Activated CD4-positive, alpha-beta memory T cell treated with anti-CD3 and anti-CD28 coated beads for 36 hours (primary cell): ENCODE measurements at regions of chr15 and their contacts with region 1.

Region 1: DNA sequence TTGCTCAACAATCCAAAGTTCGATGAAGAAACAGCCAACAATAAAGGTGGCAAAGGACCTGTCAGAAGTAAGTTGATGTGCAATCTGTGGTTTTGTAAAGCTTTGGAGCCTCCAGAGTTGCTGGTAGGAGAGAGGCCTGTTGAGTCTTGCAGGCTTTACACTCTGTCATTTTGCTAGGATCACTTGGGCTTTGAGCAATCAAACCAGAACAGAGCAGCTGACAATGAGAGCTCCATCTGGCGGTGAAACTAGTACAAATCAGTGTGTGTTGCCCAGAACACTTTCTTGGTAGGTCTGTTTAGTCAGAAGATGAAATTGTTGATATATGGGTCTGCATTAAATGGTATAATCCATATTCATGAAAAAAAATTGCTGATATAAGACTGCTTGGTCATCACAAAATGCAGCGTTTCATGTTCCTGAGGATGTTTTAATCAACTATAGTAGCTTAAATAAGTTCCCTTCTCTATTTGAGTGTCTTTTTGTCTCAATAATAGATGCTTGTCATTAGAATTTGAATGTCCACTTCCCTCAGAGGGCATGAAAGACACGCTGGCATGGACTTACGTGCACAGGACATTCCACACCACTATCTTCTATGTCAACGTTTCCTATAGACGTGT is 25.7 kb downstream of the TMOD2 start:
- DNase-seq: peak; percentile 67
- H3K4me3 Mint-ChIP-seq: no peak overlapping the region
- H3K27ac Mint-ChIP-seq: no peak overlapping the region
- H3K4me1 Mint-ChIP-seq: peaks cover 7% of the 10 kb centered on the region
- H3K27me3 Mint-ChIP-seq: no peaks in the 10 kb centered on the region

Region 2: DNA sequence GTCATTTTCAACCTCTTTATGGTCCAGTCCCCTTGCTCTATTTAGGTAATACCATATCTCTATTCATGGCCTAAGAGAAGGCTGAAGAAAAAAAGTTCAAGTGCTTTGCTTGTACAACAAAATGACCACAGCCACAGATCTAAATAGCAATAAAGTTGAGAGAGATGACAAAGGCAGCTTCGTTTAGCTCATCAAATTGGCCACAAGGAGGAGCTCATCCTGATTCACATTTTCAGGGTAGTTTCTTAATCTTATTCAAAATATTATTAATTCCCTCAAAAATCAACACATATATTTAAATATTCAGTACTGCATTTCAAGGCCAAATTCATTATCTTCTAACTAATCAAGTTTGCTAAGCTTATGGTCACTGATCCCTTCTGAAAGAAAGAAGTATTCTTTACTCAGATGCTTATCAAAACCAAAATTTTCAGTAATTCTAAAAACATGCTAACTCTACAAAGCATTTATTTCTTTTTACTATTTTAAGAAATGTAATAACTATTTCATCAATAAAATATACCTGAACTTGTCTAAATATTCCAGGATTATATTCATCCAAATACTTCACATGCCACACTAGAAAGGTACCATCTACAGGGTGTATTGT is 240.0 kb before region 1 on chr15:
- CTCF ChIA-PET with region 1: interaction called, 4 read pairs
- POLR2A ChIA-PET with region 1: no interaction called
- intact Hi-C with region 1: loop called (anchors 1 kb)
- DNase-seq: no peak
- H3K4me3 Mint-ChIP-seq: no peak overlapping the region
- H3K27ac Mint-ChIP-seq: no peak overlapping the region
- H3K4me1 Mint-ChIP-seq: peaks cover 2% of the 10 kb centered on the region
- H3K27me3 Mint-ChIP-seq: no peaks in the 10 kb centered on the region

Region 3: DNA sequence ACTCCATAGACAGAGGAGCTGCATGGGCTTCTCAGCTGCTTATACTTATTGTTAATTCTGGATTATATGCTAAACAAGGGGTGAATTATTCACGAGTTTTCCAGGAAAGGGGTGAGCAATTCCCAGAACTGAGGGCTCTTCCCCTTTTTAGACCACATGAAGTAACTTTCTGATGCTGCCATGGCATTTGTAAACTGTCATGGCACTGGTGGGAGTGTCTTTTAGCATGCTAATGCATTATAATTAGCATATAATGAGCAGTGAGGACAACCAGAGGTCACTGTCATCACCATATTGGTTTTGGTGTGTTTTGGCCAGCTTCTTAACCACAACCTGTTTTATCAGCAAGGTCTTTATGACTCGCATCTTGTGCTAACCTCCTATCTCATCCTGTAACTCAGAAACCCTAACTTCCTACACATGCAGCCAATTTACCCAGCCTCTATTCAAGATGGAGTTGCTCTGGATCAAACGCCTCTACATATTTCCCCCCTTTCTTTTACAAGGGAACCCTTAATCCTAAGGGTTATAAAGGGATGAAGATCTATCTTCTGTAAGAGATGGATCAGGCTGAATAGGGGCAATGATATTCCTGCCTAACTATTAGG is 142.4 kb before region 1 on chr15:
- CTCF ChIA-PET with region 1: interaction called, 10 read pairs
- POLR2A ChIA-PET with region 1: no interaction called
- intact Hi-C with region 1: no loop called
- DNase-seq: no peak
- H3K4me3 Mint-ChIP-seq: no peak overlapping the region
- H3K27ac Mint-ChIP-seq: no peak overlapping the region
- H3K4me1 Mint-ChIP-seq: no peaks in the 10 kb centered on the region
- H3K27me3 Mint-ChIP-seq: peaks cover 11% of the 10 kb centered on the region

Region 4: DNA sequence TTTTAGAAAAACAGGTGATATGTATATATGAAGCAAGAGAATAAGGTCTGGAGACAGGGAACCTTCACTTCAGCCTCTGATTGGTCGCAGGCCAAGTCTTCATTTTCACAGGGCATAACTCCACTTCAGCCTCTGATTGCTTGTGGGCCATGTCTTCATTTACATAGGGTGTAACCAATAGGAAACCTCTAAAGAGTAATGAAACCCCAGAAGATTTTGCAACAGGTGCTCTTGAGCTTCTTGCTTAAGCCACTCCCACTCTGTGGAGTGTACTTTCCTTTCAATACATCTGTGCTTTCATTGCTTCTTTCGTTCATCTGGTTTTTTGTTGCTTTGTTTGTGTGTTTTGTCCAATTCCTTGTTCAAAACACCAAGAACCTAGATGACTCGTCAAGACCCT is 118.4 kb before region 1 on chr15:
- CTCF ChIA-PET with region 1: interaction called, 51 read pairs
- POLR2A ChIA-PET with region 1: no interaction called
- intact Hi-C with region 1: no loop called
- DNase-seq: no peak
- H3K4me3 Mint-ChIP-seq: no peak overlapping the region
- H3K27ac Mint-ChIP-seq: no peak overlapping the region
- H3K4me1 Mint-ChIP-seq: no peaks in the 10 kb centered on the region
- H3K27me3 Mint-ChIP-seq: no peaks in the 10 kb centered on the region

Region 5: GRCh38 chr15:51726351-51727073 is 50.6 kb before region 1 on chr15:
- CTCF ChIA-PET with region 1: interaction called, 34 read pairs
- POLR2A ChIA-PET with region 1: no interaction called
- intact Hi-C with region 1: loop called (anchors 2 kb)
- DNase-seq: peak; percentile 69
- H3K4me3 Mint-ChIP-seq: no peak overlapping the region
- H3K27ac Mint-ChIP-seq: no peak overlapping the region
- H3K4me1 Mint-ChIP-seq: peaks cover 64% of the 10 kb centered on the region
- H3K27me3 Mint-ChIP-seq: no peaks in the 10 kb centered on the region

Region 6: GRCh38 chr15:51737280-51738017 is 39.6 kb before region 1 on chr15 and contains the start of gene LYSMD2:
- CTCF ChIA-PET with region 1: interaction called, 44 read pairs
- POLR2A ChIA-PET with region 1: interaction called, 3 read pairs
- intact Hi-C with region 1: loop called (anchors 2 kb)
- DNase-seq: peak; percentile 79
- H3K4me3 Mint-ChIP-seq: peak within 1 kb of the TSS; percentile 81
- H3K27ac Mint-ChIP-seq: peak within 1 kb of the TSS; percentile 85
- H3K4me1 Mint-ChIP-seq: peaks cover 55% of the 10 kb centered on the region
- H3K27me3 Mint-ChIP-seq: no peaks in the 10 kb centered on the region
- total RNA-seq, gene LYSMD2: 18.1 to 18.6 TPM

Region 7: DNA sequence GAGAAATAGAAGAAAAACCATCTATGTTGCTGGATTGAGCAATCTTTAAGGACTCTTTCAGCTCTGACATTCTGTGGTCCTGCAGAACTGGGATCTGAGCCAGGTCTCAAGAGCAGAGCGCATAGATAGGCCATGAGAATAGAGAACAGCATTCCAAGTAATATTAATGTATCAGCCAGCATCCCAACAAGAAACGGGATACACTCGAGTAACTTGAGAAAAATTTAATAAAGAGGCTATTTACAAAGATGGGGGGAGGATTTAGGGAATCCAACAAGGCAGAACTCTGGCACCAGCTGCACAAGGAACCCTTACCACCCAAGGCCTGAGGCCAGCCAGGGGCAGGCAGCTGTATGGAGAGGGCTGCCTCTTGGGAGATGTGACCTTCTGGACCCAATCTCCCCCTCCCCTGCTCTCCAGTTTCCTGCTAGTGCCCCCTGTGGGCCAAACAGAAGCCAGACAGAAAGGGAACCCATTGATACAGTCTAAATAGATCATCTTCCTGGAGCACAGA is 17.4 kb before region 1 on chr15:
- CTCF ChIA-PET with region 1: interaction called, 36 read pairs
- POLR2A ChIA-PET with region 1: no interaction called
- intact Hi-C with region 1: no loop called
- DNase-seq: peak; percentile 31
- H3K4me3 Mint-ChIP-seq: no peak overlapping the region
- H3K27ac Mint-ChIP-seq: no peak overlapping the region
- H3K4me1 Mint-ChIP-seq: peaks cover 2% of the 10 kb centered on the region
- H3K27me3 Mint-ChIP-seq: no peaks in the 10 kb centered on the region